Psoas muscle (tissue), 8 donors: ENCODE measurements at regions of chr22 and their contacts with region 1.

Region 1: GRCh38 chr22:27804470-27805297 is 3.1 kb upstream of the MN1 start:
- DNase-seq: peak; percentile 67 to 81
- ATAC-seq: peak; percentile 59 to 63 (median 60)
- H3K4me3 ChIP-seq: peak overlapping the region; percentile 10
- H3K27ac ChIP-seq: no peak overlapping the region
- H3K4me1 ChIP-seq: peaks cover 11% of the 10 kb centered on the region
- H3K27me3 ChIP-seq: peaks cover 0 to 2% (median 0%) of the 10 kb centered on the region in 3 donors
- CTCF ChIP-seq: peak; percentile 66

Region 2: DNA sequence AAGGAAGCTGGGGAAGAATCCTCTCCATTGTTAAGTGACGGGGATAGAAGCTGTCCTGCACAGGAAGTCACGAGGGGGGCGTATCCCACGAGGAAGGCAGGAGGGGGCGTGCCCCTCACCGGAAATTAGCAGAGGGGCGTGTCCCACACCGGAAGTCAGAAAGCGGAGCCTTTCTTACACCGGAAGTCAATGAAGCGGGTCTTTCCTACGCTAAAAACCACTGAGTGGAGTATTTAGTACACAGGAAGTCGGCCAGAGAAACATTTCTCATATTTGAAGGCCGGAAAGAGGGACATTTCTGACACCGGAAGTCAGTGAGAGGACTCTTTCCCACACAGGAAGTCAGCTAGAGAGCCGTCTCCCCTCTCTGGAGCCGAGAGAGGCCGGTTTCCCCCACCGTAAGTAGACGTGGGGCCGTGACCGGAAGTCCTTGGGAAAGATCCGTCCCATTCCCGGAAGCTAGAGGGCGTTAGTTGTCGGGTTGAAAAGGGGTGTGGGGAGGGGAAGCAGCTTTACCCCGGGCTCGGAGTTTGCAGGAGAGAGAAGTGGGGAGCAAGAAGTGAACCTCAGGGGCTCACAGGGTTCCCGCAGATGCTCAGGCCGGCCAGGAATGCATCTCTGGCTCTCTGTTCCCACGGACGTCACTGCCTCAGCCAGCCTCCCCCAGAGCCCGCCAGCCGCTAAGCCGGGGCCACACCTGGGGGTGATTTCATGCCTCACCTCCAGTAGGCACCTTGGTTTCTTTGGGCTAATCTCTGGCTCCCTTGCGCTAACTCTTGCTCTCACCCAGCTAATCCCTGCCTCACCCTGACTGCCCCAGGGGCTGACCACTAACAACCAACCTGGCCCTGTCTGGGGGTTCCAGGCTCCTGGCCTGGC is 1131.9 kb before region 1 on chr22:
- intact Hi-C with region 1: loop called in 1 of 2 experiments (anchors 10 kb)
- DNase-seq: peak; percentile 92 to 95
- ATAC-seq: peak; percentile 94 to 96 (median 95)
- H3K4me3 ChIP-seq: peak overlapping the region; percentile 95
- H3K27ac ChIP-seq: peak overlapping the region; percentile 99
- H3K4me1 ChIP-seq: peaks cover 17% of the 10 kb centered on the region
- H3K27me3 ChIP-seq: peaks cover 0 to 2% (median 0%) of the 10 kb centered on the region in 3 donors
- CTCF ChIP-seq: peak; percentile 47

Region 3: GRCh38 chr22:26756675-26757293 is 1047.9 kb before region 1 on chr22:
- intact Hi-C with region 1: loop called in 1 of 2 experiments (anchors 5 kb)
- DNase-seq: peak; percentile 66 to 68
- ATAC-seq: peak; percentile 77 to 92 (median 87)
- H3K4me3 ChIP-seq: peak overlapping the region; percentile 54
- H3K27ac ChIP-seq: no peak overlapping the region
- H3K4me1 ChIP-seq: no peaks in the 10 kb centered on the region
- H3K27me3 ChIP-seq: no peaks in the 10 kb centered on the region
- CTCF ChIP-seq: peak; percentile 99

Region 4: DNA sequence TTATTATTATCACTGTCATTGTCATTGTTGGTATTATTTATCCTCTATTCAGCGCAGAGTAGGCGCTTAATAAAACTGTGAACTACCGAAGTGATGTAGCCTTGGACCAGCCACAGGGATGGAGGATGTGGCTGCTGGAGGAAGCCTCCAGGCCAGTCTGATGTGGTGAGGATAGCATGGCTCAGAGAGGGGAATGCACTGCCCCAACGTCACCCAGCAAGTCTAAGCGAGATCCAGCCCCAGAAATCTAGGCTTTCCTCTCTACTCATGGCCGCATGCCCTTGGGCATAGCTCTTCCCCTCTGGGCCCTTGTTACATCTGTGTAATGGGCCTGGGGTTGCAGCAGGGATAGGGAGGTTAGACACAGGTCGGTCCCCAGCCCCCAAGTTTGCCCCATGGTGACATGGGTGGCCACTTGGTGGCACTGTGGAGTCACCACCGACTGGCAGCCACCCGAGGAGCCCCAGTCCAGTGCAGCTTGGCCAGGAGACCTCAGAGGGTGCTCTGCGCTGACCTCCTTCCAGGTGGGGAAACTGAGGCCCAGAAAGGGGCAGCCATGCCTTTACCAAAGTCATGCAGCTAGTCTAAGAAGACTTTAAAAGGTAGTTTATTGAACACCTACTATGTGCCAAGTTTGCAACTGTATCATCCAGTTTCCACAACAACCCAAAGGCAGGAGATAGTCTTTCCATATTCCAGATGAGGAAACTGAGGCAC is 398.9 kb before region 1 on chr22:
- intact Hi-C with region 1: loop called (anchors 1 to 5 kb)
- DNase-seq: peak; percentile 65 to 78
- ATAC-seq: peak; percentile 83 to 94 (median 88)
- H3K4me3 ChIP-seq: no peak overlapping the region
- H3K27ac ChIP-seq: no peak overlapping the region
- H3K4me1 ChIP-seq: no peaks in the 10 kb centered on the region
- H3K27me3 ChIP-seq: peaks cover 0 to 7% (median 0%) of the 10 kb centered on the region in 3 donors
- CTCF ChIP-seq: peak; percentile 78

Region 5: GRCh38 chr22:27489176-27489675 is 315.5 kb before region 1 on chr22:
- intact Hi-C with region 1: loop called in 1 of 2 experiments (anchors 5 kb)
- DNase-seq: no peak
- ATAC-seq: peak in 1 of 4 donors; percentile 27
- H3K4me3 ChIP-seq: no peak overlapping the region
- H3K27ac ChIP-seq: no peak overlapping the region
- H3K4me1 ChIP-seq: peaks cover 11% of the 10 kb centered on the region
- H3K27me3 ChIP-seq: no peaks in the 10 kb centered on the region
- CTCF ChIP-seq: no peak

Region 6: GRCh38 chr22:27507111-27507611 is 297.5 kb before region 1 on chr22:
- intact Hi-C with region 1: loop called in 1 of 2 experiments (anchors 5 kb)
- DNase-seq: no peak
- ATAC-seq: no peak
- H3K4me3 ChIP-seq: no peak overlapping the region
- H3K27ac ChIP-seq: no peak overlapping the region
- H3K4me1 ChIP-seq: peaks cover 50% of the 10 kb centered on the region
- H3K27me3 ChIP-seq: no peaks in the 10 kb centered on the region
- CTCF ChIP-seq: no peak

Region 7: GRCh38 chr22:27632451-27633295 is 172.0 kb before region 1 on chr22:
- intact Hi-C with region 1: loop called (anchors 5 kb)
- DNase-seq: no peak
- ATAC-seq: peak in 2 of 4 donors; percentile 4 to 7
- H3K4me3 ChIP-seq: no peak overlapping the region
- H3K27ac ChIP-seq: no peak overlapping the region
- H3K4me1 ChIP-seq: peaks cover 13% of the 10 kb centered on the region
- H3K27me3 ChIP-seq: no peaks in the 10 kb centered on the region
- CTCF ChIP-seq: no peak

Region 8: DNA sequence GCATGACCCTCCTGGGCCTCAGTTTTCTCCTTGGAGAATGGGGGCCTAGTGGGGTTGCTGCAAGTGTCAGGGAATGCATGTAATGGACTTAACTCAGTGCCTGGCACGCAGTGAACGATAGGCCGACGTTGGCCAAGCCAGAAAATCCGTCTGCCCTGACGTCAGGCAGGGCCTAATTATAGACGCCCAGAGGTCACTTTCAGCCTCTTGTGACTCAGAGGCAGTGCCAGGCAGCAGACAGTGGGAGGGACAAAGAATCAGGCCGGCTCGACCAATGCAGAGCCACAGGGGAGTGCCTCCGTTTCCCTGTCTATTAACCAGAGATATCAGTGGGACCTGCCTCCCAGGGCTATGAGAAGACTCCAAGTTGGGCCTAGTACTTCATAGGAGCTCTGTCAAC is 118.2 kb before region 1 on chr22:
- intact Hi-C with region 1: no loop called
- DNase-seq: peak; percentile 82 to 91
- ATAC-seq: peak; percentile 91 to 98 (median 92)
- H3K4me3 ChIP-seq: no peak overlapping the region
- H3K27ac ChIP-seq: peak overlapping the region; percentile 93
- H3K4me1 ChIP-seq: peaks cover 22% of the 10 kb centered on the region
- H3K27me3 ChIP-seq: no peaks in the 10 kb centered on the region
- CTCF ChIP-seq: no peak

Region 9: GRCh38 chr22:28344918-28345703 is 540.4 kb after region 1 on chr22:
- intact Hi-C with region 1: no loop called
- DNase-seq: no peak
- ATAC-seq: peak in 1 of 4 donors; percentile 64
- H3K4me3 ChIP-seq: no peak overlapping the region
- H3K27ac ChIP-seq: no peak overlapping the region
- H3K4me1 ChIP-seq: peaks cover 31% of the 10 kb centered on the region
- H3K27me3 ChIP-seq: no peaks in the 10 kb centered on the region
- CTCF ChIP-seq: no peak